Sciatic nerve (tissue), 2 donors: ENCODE measurements at regions of chr6 and their contacts with region 1.

Region 1: DNA sequence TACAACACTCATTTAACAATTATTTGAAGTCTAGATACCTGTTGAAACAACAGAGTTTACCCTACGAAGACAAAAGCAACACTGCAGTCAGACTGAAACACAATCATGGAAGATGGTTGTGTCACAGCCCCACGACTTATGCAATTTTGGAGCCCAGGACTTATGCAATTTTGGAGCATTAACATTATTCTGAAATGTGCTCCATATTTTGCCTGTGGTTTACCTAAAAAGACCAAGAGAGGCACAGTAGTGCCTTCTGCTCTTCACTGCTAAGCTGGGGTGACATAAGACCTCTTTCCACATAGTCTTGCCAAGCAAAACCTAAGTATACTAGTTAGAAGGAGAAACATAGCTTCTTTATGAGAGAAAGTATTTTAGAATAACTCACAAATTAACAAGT is 216.5 kb downstream of the PTPRK start:
- DNase-seq: no peak
- ATAC-seq: no peak

Region 2: DNA sequence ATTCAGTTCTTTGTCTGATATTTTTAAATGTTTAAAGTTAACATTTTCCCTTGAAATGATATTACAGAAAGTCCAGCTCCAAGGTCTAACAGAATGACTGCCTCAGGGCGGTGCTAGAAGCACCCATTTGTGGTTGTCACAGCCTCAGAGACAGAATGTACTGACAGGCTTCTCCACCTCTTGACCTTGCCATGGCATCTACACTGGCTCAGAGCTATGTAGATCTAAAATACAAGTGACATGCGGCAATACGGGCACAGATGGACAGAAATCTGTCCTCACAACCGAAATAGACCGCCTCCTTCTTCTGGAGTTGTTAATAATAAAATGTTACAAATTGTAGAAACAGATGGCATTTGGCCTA is 235.8 kb before region 1 on chr6:
- intact Hi-C with region 1: loop called (anchors 5 kb)
- DNase-seq: no peak
- ATAC-seq: no peak

Region 3: DNA sequence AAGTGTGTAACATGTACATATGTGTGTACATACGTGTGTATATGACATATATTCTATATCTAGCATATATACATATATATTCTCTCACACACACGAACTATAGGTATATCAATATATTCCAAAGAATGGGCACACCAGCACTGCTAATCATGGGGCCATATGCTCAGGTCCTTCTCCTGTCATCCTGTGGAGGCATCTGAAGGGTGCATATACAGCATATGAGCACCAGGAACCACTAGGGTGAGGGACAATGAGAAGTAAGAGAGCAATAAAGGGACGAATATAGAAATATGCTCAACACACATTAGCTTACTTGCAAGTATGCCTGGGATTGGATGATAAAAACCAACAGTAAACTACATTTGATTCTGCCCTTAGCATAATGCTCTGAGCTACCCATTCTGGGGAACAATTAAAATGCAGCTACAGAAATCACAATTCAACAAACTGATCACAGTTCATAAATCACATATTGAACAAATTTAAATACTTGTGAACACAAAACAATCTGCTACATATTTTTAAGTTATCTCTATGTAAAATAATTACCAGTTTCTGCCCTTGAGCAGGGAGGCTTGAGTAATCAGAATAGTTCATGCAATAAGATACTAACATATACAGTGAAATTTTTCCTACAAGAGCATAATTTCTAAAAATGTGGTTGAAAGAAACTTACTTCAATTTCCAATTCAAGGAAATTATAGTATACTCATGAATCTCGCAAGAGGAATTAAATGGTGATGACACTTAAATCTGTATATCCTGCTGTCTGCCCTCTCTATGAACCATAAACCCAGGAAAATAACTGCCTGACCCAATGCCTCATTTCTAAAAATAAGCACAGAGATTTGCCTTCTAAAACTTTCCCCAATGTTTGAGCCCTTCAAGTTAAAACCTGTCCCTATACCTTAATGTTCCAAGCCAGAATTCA is 130.9 kb before region 1 on chr6:
- intact Hi-C with region 1: no loop called
- DNase-seq: no peak
- ATAC-seq: no peak

Region 4: DNA sequence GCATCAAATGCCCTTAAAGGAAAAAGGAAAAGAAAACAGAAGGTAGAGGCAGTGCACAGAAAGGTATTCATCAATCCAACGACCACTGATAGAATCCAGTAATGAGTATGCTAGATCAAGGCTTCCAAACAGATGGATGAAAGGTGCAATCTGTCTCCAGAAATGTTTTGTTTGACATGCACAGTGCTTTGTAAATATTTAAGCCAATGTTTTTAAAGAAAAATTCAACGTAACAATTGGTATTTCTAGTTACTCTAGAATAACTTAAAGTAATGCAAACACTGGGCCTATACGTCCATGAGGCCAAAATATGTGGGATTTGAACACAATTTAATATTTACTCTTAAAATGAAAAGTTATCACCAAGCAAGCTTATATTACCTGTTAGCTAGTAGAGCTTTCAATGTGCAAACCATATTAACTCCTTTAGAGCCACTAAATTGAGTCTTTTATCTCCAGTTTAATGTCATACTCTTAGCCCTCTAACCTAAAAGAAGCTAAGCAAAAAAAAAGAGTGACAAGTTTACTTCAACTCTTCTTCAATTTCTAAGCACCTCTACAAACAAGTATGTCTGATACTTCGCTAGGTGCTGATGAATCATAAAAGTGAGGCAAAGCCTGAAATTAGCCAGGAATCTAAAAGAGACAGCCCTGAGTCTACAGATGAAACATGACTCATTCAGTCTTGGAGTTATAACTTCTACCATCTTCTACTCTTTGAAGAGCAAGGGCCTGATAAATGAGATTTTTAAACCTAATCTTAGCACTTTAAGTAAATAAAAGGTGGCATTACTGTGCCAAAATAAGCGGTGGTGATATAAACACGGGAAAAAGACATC is 46.8 kb after region 1 on chr6:
- intact Hi-C with region 1: no loop called
- DNase-seq: no peak
- ATAC-seq: no peak